Stomach (tissue), 19 donors: ENCODE measurements at regions of chr10 and their contacts with region 1.

Region 1: GRCh38 chr10:71191531-71192076 is 20.8 kb upstream of the UNC5B start:
- DNase-seq: peak in 1 of 2 donors; percentile 23
- H3K4me3 ChIP-seq: no peak overlapping the region
- H3K27ac ChIP-seq: no peak overlapping the region
- H3K4me1 ChIP-seq: peaks cover 0 to 12% (median 7%) of the 10 kb centered on the region in 4 donors
- H3K27me3 ChIP-seq: peaks cover 0 to 21% (median 0%) of the 10 kb centered on the region in 3 donors
- CTCF ChIP-seq: no peak
- EP300 ChIP-seq: no peak
- POLR2A ChIP-seq: no peak

Region 2: GRCh38 chr10:70931168-70931815 is 260.3 kb before region 1 on chr10:
- intact Hi-C with region 1: loop called (anchors 10 kb)
- DNase-seq: no peak
- H3K4me3 ChIP-seq: no peak overlapping the region
- H3K27ac ChIP-seq: no peak overlapping the region
- H3K4me1 ChIP-seq: peaks cover 0 to 14% (median 0%) of the 10 kb centered on the region in 4 donors
- H3K27me3 ChIP-seq: peaks cover 0 to 32% (median 0%) of the 10 kb centered on the region in 3 donors
- CTCF ChIP-seq: no peak
- EP300 ChIP-seq: no peak
- POLR2A ChIP-seq: no peak